MCF 10A (cell line): ENCODE measurements at regions of chr20 and their contacts with region 1.

Region 1: GRCh38 chr20:14288341-14289330 is 48.8 kb downstream of the FLRT3 start:
- DNase-seq: peak; percentile 80
- H3K4me3 Mint-ChIP-seq: peak overlapping the region; percentile 20
- H3K27ac Mint-ChIP-seq: peak overlapping the region; percentile 98
- H3K4me1 Mint-ChIP-seq: peaks cover 45% of the 10 kb centered on the region
- H3K27me3 Mint-ChIP-seq: no peaks in the 10 kb centered on the region
- CTCF ChIP-seq: no peak

Region 2: GRCh38 chr20:14329327-14329726 is 40.7 kb after region 1 on chr20:
- CTCF ChIA-PET with region 1: interaction called, 4 read pairs
- POLR2A ChIA-PET with region 1: interaction called, 25 read pairs
- intact Hi-C with region 1: loop called (anchors 2 kb)
- DNase-seq: no peak
- H3K4me3 Mint-ChIP-seq: no peak overlapping the region
- H3K27ac Mint-ChIP-seq: peak overlapping the region; percentile 36
- H3K4me1 Mint-ChIP-seq: peaks cover 16% of the 10 kb centered on the region
- H3K27me3 Mint-ChIP-seq: no peaks in the 10 kb centered on the region
- CTCF ChIP-seq: no peak